Ascending aorta (tissue), 2 donors: ENCODE measurements at regions of chr1 and their contacts with region 1.

Region 1: GRCh38 chr1:88683541-88684481 is at the start of gene PKN2:
- DNase-seq: peak; percentile 88 to 99
- H3K4me3 ChIP-seq: peak within 1 kb of the TSS; percentile 86 to 88
- H3K27ac ChIP-seq: peak within 1 kb of the TSS; percentile 84 to 94
- H3K4me1 ChIP-seq: peaks cover 0 to 16% of the 10 kb centered on the region in 2 donors
- H3K27me3 ChIP-seq: no peaks in the 10 kb centered on the region
- CTCF ChIP-seq: peak in 2 of 3 experiments; percentile 34
- total RNA-seq, gene PKN2: 7.3 TPM

Region 2: DNA sequence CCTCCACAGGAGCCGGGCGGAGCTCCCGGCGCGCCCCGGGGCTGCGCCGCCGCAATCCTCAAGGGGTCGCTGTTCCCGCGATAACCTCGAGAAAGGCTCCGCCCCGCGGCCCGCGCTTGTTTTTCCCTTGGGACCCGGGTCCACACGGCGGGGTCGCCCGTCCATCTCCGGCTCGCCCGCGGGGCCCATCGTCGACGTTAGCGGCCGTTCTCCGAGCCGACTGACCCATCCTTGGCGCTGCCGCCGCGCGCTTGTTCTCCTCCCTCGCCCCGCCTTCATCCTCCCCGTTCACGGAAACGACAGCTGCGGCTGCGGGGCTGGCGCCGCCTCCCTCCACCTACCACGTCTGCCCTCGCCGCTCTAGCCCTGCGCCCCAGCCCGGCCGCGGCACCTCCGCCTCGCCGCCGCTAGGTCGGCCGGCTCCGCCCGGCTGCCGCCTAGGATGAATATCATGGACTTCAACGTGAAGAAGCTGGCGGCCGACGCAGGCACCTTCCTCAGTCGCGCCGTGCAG is 1979.3 kb before region 1 on chr1 and contains the start of gene SH3GLB1:
- intact Hi-C with region 1: loop called (anchors 10 kb)
- DNase-seq: peak; percentile 28 to 92
- H3K4me3 ChIP-seq: peak within 1 kb of the TSS; percentile 79 to 90
- H3K27ac ChIP-seq: peak within 1 kb of the TSS; percentile 93 to 97
- H3K4me1 ChIP-seq: peaks cover 4 to 29% of the 10 kb centered on the region in 2 donors
- H3K27me3 ChIP-seq: no peaks in the 10 kb centered on the region
- CTCF ChIP-seq: peak; percentile 86 to 96 (median 90)
- total RNA-seq, gene SH3GLB1: 28.9 TPM

Region 3: GRCh38 chr1:87328272-87329050 is 1355.3 kb before region 1 on chr1 and contains the start of gene LMO4:
- intact Hi-C with region 1: loop called (anchors 5 kb)
- DNase-seq: peak; percentile 94 to 99
- H3K4me3 ChIP-seq: peak within 1 kb of the TSS; percentile 73 to 94
- H3K27ac ChIP-seq: peak within 1 kb of the TSS; percentile 95 to 98
- H3K4me1 ChIP-seq: peaks cover 0 to 11% of the 10 kb centered on the region in 2 donors
- H3K27me3 ChIP-seq: no peaks in the 10 kb centered on the region
- CTCF ChIP-seq: no peak
- total RNA-seq, gene LMO4: 9.9 TPM

Region 4: DNA sequence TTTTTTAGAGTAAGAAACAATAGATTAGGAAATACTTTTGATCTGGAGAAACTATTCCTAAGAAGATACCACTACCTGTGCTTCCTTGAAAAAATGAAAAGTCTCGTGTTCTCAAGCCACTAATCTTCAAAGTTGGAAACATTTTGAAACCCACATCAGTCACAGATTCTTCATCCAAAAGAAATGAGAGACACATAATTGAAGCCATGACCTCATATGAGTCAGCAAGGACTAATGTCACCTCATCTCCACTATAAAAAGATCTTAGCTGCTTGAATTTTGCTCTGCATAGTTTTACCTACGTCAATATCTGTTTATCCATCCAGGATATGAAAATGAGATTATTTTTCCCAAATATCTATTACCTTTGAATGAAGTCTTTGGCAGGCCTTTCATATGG is 312.4 kb before region 1 on chr1:
- intact Hi-C with region 1: no loop called
- DNase-seq: no peak
- H3K4me3 ChIP-seq: no peak overlapping the region
- H3K27ac ChIP-seq: no peak overlapping the region
- H3K4me1 ChIP-seq: no peaks in the 10 kb centered on the region
- H3K27me3 ChIP-seq: no peaks in the 10 kb centered on the region
- CTCF ChIP-seq: no peak

Region 5: DNA sequence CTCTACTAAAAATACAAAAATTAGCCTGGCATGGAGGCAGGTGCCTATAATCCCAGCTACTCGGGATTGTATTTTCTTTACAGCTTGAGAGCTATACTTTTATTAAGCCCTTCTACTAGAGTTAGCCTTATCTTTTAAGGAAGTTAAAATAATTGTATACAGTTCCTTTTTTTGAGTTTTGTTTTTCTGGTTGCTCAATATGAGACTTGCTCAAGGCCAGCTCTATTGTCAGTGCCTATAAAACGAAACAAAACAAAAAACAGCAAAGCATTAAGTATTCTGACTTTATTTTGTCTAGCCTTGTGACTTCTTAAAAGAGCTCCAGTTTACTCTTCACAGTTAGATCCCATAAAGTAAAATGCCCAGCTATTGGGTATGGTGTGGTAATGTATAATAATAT is 17.5 kb after region 1 on chr1:
- intact Hi-C with region 1: no loop called
- DNase-seq: no peak
- H3K4me3 ChIP-seq: no peak overlapping the region
- H3K27ac ChIP-seq: no peak overlapping the region
- H3K4me1 ChIP-seq: no peaks in the 10 kb centered on the region
- H3K27me3 ChIP-seq: no peaks in the 10 kb centered on the region
- CTCF ChIP-seq: no peak

Region 6: DNA sequence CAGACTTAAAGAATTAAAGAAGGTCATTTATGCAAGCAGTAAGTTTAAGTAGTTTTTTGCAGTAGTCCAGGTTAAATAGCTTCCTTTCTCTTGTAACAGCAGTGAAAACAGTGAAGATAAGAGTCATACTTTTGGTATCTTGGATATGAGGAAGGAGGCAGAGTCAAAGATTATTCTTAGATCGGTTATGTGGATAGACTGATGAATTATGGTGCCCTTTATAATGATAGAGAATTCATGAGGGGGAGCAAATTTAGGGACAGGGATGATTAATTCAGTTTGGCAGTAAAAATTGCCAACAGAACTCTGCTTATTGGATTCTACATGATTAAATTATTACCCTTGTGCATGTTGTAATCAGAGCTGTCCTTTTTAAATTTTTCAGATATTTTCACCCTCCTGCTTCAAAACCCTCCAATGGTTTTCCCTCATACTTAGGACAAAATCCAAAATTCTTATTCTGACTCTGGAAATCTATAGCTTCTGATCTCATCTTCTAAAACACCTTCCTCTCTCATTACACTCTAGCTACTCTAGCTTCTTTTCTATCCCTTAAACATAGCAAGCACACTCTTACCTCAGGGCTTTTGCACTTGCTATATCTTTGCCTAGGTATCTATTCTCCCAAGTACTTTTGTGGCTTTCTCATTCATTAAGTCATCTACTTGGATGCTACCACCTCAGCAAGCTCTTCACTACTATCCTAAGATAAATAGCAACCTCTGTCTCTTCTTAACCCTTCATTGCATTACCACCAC is 80.0 kb after region 1 on chr1:
- intact Hi-C with region 1: loop called (anchors 2 kb)
- DNase-seq: no peak
- H3K4me3 ChIP-seq: no peak overlapping the region
- H3K27ac ChIP-seq: no peak overlapping the region
- H3K4me1 ChIP-seq: no peaks in the 10 kb centered on the region
- H3K27me3 ChIP-seq: no peaks in the 10 kb centered on the region
- CTCF ChIP-seq: no peak

Region 7: DNA sequence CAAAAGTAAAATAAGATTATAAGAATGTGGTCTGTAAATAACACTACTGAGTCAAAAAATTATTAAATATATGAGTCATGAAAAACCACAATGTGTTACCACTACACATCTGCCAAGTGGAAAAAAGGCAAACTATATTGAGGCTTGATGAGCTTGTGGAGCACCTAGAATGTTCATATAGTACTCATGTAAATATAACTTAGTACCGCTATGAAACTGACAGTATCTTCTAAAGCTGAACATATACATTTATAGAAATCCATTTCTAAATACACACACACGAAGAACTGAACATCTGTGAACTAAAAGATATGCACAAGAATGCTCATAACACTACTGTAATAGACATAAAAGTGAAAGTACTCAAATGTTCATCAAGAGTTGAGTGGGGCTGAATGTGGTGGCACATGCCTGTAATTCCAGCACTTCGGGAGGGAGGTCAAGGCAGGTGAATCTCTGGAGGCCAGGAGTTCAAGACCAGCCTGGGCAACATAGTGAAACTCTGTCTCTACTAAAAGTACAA is 357.4 kb after region 1 on chr1:
- intact Hi-C with region 1: no loop called
- DNase-seq: no peak
- H3K4me3 ChIP-seq: no peak overlapping the region
- H3K27ac ChIP-seq: no peak overlapping the region
- H3K4me1 ChIP-seq: no peaks in the 10 kb centered on the region
- H3K27me3 ChIP-seq: no peaks in the 10 kb centered on the region
- CTCF ChIP-seq: no peak

Region 8: GRCh38 chr1:89524369-89525168 is 840.8 kb after region 1 on chr1 and contains the start of gene LRRC8B:
- intact Hi-C with region 1: loop called (anchors 5 kb)
- DNase-seq: peak; percentile 49 to 92
- H3K4me3 ChIP-seq: peak within 1 kb of the TSS; percentile 94 to 99
- H3K27ac ChIP-seq: peak within 1 kb of the TSS; percentile 53 to 74
- H3K4me1 ChIP-seq: peaks cover 0 to 6% of the 10 kb centered on the region in 2 donors
- H3K27me3 ChIP-seq: no peaks in the 10 kb centered on the region
- CTCF ChIP-seq: peak in 1 of 3 experiments; percentile 8
- total RNA-seq, gene LRRC8B: 4.2 TPM